PC-3 (cell line): ENCODE measurements at regions of chr6 and their contacts with region 1.

Region 1: DNA sequence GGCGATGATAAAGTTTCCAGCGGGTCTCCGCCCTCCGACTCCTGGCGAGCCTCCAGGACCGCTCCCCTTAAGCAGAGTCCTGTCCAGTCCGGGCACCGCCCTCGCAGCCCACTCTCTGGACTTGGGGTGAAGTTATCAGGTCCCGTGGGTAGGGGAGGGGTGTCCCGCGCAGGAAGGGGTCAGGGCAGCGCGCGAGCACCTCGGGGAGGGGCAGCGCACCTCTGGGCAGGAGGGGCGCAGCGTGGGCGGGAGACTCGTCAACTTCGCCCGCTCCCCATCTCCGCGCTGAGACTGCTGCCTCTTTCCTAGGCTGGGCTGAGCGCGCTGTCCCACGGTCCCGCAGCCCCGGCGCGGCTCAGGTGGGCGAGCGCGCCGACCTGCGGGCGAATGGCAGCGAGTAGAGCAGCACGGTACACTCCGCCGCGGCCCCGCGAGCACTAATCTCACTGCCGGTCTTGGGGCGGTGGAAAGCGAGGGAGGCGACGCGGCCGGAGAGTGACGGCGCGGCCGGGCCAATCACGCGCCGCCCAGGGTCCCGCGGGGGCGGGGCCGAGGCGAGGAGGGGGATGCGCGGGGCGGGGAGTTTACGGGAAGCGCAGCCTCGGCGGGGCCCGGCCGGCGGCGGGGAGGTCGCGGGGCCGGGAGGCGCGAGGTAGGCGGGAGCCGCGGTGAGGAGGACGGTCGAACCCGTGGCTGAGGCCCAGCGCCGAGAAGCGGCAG is at the start of gene MAN1A1:
- DNase-seq: peak; percentile 78
- ATAC-seq: peak; percentile 78
- H3K4me3 ChIP-seq: peak within 1 kb of the TSS; percentile 92
- H3K27ac ChIP-seq: peak within 1 kb of the TSS; percentile 22
- H3K4me1 ChIP-seq: peaks cover 21% of the 10 kb centered on the region; the same call in 1 of the 2 replicates
- H3K27me3 ChIP-seq: no peaks in the 10 kb centered on the region
- CTCF ChIP-seq: no peak
- total RNA-seq, gene MAN1A1: 19.0 and 24.6 TPM in 2 replicates

Region 2: DNA sequence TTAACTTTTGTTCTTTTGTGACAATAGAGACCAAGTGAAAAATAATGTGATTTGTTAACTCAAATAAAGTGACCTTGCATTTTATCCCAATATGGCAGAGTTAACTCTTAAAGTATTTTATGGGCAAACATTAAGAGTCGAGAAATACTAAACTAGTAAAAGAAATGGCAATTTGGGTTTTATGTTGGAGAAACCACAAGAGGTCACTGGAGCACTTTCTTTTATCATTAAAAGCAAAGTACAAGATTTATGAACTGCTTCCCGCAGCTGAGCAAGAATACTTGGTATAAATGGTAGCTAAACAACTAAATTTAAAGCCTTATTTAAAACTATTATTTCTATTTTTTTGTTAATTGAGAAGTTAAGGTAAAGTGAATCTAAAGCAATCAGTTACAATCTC is 381.1 kb before region 1 on chr6:
- CTCF ChIA-PET with region 1: no interaction called
- POLR2A ChIA-PET with region 1: no interaction called
- intact Hi-C with region 1: loop called (anchors 10 kb)
- DNase-seq: peak; percentile 37
- ATAC-seq: peak; percentile 54; the same call in 1 of the 2 replicates
- H3K4me3 ChIP-seq: no peak overlapping the region
- H3K27ac ChIP-seq: no peak overlapping the region
- H3K4me1 ChIP-seq: no peaks in the 10 kb centered on the region
- H3K27me3 ChIP-seq: no peaks in the 10 kb centered on the region
- CTCF ChIP-seq: peak; percentile 46; the same call in 1 of the 2 replicates

Region 3: DNA sequence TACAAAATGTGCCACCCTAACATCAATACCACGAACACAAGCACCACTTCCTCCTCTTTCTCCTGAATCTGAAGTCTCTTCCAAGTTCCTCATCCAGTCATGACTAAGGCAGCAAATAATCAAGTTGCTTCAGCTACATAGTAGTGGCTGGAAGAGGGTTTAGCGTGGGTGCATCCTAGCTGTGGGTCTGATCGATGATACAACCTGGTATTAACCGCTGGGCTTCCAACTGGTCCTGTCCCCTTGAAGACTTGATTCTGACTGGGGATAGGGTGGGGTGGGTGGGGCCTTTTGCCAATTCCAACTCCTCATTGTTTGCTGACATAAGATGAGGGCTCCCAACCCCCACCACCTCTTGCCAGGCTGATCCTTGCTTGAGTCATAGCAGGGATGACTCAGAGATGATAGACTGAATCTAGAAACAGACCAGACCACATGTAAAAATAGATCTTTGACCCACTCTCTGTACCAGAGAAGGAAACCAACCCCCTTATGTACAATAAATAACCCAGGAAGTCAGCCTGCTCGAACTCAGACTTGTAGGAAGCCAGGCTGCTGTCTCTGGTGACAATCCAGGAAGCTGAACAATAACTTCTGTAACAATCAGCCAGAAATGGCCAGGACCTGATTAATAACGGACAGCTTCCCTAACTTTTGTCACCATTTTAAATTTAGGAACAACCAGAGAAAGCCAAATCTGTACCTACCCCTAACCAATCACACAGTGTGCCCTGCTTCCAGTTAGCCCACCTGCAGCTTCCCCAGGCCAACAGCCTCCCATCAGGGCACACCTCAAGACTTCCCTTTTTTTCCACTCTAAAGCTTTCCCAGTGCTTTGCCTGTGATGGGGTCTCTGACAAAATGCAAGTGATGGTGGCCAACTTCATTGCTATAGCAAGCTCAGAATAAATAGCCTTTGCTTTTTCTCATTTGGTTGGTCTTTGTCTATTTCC is 202.1 kb before region 1 on chr6:
- CTCF ChIA-PET with region 1: interaction called, 14 read pairs
- POLR2A ChIA-PET with region 1: no interaction called
- intact Hi-C with region 1: loop called (anchors 1 kb)
- DNase-seq: peak; percentile 95
- ATAC-seq: peak; percentile 77
- H3K4me3 ChIP-seq: peak overlapping the region; percentile 53
- H3K27ac ChIP-seq: peak overlapping the region; percentile 92
- H3K4me1 ChIP-seq: peaks cover 38% of the 10 kb centered on the region
- H3K27me3 ChIP-seq: no peaks in the 10 kb centered on the region
- CTCF ChIP-seq: no peak

Region 4: GRCh38 chr6:119541132-119541905 is 191.8 kb after region 1 on chr6:
- CTCF ChIA-PET with region 1: no interaction called
- POLR2A ChIA-PET with region 1: no interaction called
- intact Hi-C with region 1: loop called (anchors 2 kb)
- DNase-seq: peak; percentile 91
- ATAC-seq: peak; percentile 96
- H3K4me3 ChIP-seq: peak overlapping the region; percentile 7; the same call in 1 of the 2 replicates
- H3K27ac ChIP-seq: peak overlapping the region; percentile 98
- H3K4me1 ChIP-seq: peaks cover 20% of the 10 kb centered on the region
- H3K27me3 ChIP-seq: no peaks in the 10 kb centered on the region
- CTCF ChIP-seq: no peak

Region 5: GRCh38 chr6:119727504-119728217 is 378.2 kb after region 1 on chr6:
- CTCF ChIA-PET with region 1: no interaction called
- POLR2A ChIA-PET with region 1: no interaction called
- intact Hi-C with region 1: loop called (anchors 5 kb)
- DNase-seq: peak; percentile 50
- ATAC-seq: peak; percentile 38; the same call in 1 of the 2 replicates
- H3K4me3 ChIP-seq: no peak overlapping the region
- H3K27ac ChIP-seq: peak overlapping the region; percentile 50
- H3K4me1 ChIP-seq: peaks cover 15% of the 10 kb centered on the region
- H3K27me3 ChIP-seq: no peaks in the 10 kb centered on the region
- CTCF ChIP-seq: no peak; the same call in 1 of the 2 replicates

Region 6: GRCh38 chr6:119978274-119978889 is 628.9 kb after region 1 on chr6:
- CTCF ChIA-PET with region 1: interaction called, 3 read pairs
- POLR2A ChIA-PET with region 1: no interaction called
- intact Hi-C with region 1: loop called (anchors 2 kb)
- DNase-seq: peak; percentile 51
- ATAC-seq: peak; percentile 64
- H3K4me3 ChIP-seq: no peak overlapping the region
- H3K27ac ChIP-seq: no peak overlapping the region
- H3K4me1 ChIP-seq: no peaks in the 10 kb centered on the region
- H3K27me3 ChIP-seq: no peaks in the 10 kb centered on the region
- CTCF ChIP-seq: peak; percentile 81

Region 7: GRCh38 chr6:120378582-120379220 is 1029.2 kb after region 1 on chr6:
- CTCF ChIA-PET with region 1: no interaction called
- POLR2A ChIA-PET with region 1: no interaction called
- intact Hi-C with region 1: loop called (anchors 10 kb)
- DNase-seq: peak; percentile 70
- ATAC-seq: peak; percentile 81
- H3K4me3 ChIP-seq: no peak overlapping the region
- H3K27ac ChIP-seq: no peak overlapping the region
- H3K4me1 ChIP-seq: no peaks in the 10 kb centered on the region
- H3K27me3 ChIP-seq: no peaks in the 10 kb centered on the region
- CTCF ChIP-seq: peak; percentile 92